A549 (cell line): ENCODE measurements at regions of chr6 and their contacts with region 1.

Region 1: DNA sequence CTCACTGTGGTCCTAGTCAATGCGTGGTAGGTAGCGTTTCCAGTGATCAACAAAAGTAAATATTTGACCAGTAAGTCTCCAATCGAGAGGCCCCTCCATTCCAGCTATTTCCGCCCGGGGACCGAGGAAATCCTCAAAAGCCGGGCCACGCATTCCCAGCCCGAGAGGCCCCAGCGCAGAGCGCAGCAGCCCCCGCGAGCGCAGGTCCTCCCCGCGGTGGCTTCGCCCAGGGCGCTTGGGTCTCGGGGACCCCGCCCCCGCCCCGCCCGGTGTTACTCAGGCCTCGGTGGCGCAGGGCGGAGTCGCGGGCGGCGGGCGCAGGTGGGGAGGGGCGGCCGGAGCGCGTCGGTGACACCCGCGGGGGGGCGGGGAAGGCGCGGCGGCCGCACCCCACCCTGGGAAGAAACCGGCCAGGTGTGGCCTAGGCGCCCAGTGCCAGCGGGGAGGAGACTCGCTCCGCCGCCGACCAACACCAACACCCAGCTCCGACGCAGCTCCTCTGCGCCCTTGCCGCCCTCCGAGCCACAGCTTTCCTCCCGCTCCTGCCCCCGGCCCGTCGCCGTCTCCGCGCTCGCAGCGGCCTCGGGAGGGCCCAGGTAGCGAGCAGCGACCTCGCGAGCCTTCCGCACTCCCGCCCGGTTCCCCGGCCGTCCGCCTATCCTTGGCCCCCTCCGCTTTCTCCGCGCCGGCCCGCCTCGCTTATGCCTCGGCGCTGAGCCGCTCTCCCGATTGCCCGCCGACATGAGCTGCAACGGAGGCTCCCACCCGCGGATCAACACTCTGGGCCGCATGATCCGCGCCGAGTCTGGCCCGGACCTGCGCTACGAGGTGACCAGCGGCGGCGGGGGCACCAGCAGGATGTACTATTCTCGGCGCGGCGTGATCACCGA is at the start of gene DSP:
- DNase-seq: peak; percentile 55 to 69
- ATAC-seq: peak; percentile 72 to 79
- H3K4me3 ChIP-seq: peak within 1 kb of the TSS; percentile 66
- H3K27ac ChIP-seq: peak within 1 kb of the TSS; percentile 86 to 95
- H3K4me1 ChIP-seq: peaks cover 22% of the 10 kb centered on the region
- CTCF ChIP-seq: no peak
- EP300 ChIP-seq: no peak
- POLR2A ChIP-seq: peak; percentile 69
- RAD21 ChIP-seq: no peak
- polyA plus RNA-seq, gene DSP: 34.1 and 45.4 TPM in 2 replicates

Region 2: DNA sequence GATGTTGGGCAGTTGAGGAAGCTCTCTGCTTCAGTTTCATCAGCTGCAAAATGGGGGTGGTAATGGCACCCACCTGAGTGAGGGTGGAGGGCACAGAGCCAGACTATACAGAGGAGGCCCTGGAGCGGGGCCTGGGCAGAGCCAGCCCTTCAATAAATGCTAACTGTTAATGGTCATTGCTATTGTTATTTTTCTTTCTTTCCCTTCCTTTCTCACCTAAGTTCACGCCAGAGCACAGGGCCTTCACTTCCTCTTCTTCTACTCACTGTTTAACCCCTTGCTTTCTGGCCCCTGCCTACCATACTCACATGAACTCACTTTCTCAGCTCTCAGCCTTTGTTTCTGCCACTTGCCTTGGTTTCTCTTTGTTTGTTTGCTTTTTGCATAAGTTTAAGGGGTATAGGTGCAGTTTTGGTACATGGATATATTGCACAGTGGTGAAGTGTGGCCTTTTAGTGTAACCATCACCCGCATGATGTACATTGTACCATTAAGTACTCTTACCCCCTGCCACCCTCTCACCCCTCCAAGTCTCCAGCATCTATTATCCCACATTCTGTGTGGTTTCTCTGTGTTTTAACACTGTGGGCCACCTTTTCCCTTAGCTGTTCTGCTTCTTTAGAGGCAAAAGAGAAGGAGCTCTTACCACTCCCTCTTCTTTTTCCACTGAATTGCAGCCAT is 441.2 kb before region 1 on chr6:
- CTCF ChIA-PET with region 1: no interaction called
- POLR2A ChIA-PET with region 1: no interaction called
- DNase-seq: no peak
- ATAC-seq: no peak
- H3K4me3 ChIP-seq: no peak overlapping the region
- H3K27ac ChIP-seq: no peak overlapping the region
- H3K4me1 ChIP-seq: no peaks in the 10 kb centered on the region
- CTCF ChIP-seq: no peak
- EP300 ChIP-seq: no peak
- POLR2A ChIP-seq: no peak
- RAD21 ChIP-seq: no peak

Region 3: DNA sequence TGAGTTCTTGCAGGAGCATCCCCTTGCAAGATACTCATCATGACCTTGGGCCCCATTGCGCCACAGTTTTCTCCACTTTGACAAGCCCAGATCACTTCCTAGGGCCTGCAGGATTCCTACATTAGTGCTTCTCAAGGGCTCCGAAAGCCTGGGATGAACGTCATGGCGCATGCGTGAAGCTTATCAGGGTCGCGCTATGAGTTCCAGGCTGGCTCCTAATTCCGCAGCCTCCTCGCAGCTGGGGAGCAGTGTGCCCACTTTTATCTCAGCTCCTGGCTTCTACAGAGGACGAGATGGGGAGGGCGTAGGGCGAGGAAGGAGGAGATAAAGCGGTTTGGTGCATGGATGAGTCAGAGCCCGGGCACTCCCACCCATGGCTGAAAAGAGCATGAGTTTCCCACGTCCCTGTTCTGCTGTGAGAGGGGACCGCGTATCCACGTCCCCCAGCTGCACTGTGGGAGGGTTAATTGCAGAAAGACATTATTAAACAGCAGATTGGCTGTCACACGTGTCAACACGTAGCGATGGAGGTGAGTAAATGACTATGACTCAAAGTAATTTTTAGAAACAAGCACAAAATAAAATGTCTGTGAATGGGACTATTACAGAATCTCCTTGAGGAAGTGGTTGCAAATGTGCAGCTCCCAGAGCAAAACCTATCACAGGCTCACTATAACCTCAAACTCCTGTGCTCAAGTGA is 72.9 kb before region 1 on chr6:
- CTCF ChIA-PET with region 1: no interaction called
- POLR2A ChIA-PET with region 1: interaction called, 10 read pairs
- DNase-seq: peak; percentile 64 to 75
- ATAC-seq: peak; percentile 92
- H3K4me3 ChIP-seq: peak overlapping the region; percentile 38
- H3K27ac ChIP-seq: peak overlapping the region; percentile 58 to 88
- H3K4me1 ChIP-seq: peaks cover 18% of the 10 kb centered on the region
- CTCF ChIP-seq: no peak
- EP300 ChIP-seq: no peak
- POLR2A ChIP-seq: peak; percentile 33
- RAD21 ChIP-seq: no peak

Region 4: DNA sequence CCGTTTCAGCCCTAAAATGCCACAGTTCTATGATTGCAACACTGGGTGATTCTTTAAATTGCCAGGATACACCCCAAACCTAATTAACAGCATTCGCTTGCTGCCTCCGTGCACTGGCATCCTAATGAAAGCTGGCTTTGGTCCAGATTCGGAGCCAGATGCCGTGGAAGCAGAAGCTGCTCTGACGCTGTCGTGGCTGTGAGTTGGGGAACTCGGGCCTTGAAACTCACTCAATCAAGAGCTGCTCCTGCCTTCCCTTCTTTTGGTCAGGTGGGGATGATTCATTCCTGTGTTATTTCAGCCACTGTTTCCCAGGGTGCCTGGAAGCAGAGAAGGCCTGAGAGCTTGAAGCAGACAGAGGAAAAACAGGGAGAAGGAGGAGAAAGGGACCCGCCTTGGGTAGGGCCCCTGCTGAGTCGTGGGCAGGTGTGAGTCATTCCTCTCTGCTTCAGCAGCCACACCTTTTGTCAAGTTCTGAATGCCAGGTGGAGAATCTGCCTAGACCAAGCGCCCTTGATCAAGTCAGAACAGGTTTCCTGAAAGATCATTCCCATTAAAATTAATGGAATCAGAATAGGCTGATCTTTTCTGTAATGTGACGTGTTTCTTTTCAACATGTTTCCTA is 36.1 kb before region 1 on chr6:
- CTCF ChIA-PET with region 1: no interaction called
- POLR2A ChIA-PET with region 1: interaction called, 11 read pairs
- DNase-seq: peak; percentile 56 to 81
- ATAC-seq: peak; percentile 91 to 95
- H3K4me3 ChIP-seq: no peak overlapping the region
- H3K27ac ChIP-seq: peak overlapping the region; percentile 61 to 64
- H3K4me1 ChIP-seq: peaks cover 14% of the 10 kb centered on the region
- CTCF ChIP-seq: no peak
- EP300 ChIP-seq: peak in 1 of 2 experiments; percentile 21; a peak in 1 of 5 replicates
- POLR2A ChIP-seq: no peak
- RAD21 ChIP-seq: 0 out of 5 replicates have a peak, but pooled peaks of 1 of the 2 experiments have one; percentile 5

Region 5: DNA sequence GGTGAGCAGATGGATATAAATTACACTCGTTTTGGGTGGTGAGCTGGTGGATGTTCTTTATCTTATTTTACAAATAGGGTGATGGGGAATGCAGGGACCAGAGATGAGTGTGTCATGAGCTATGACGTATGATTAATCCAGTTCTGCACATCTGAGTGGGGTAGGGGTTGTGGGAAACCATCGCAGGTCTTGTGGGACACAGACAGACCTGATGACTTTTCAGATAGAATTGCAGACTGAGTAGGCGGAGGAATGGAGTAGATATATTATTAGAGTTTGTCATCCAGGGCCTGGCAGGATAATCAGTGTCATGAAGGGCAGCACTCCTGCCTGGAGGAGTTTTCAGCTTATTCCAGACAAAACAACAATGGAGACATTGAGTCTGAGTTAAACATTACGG is 12.9 kb before region 1 on chr6:
- CTCF ChIA-PET with region 1: no interaction called
- POLR2A ChIA-PET with region 1: no interaction called
- DNase-seq: no peak
- ATAC-seq: no peak
- H3K4me3 ChIP-seq: no peak overlapping the region
- H3K27ac ChIP-seq: no peak overlapping the region
- H3K4me1 ChIP-seq: no peaks in the 10 kb centered on the region
- CTCF ChIP-seq: no peak
- EP300 ChIP-seq: no peak
- POLR2A ChIP-seq: no peak
- RAD21 ChIP-seq: no peak

Region 6: GRCh38 chr6:7554533-7555275 is 13.3 kb after region 1 on chr6:
- CTCF ChIA-PET with region 1: no interaction called
- POLR2A ChIA-PET with region 1: no interaction called
- DNase-seq: no peak
- ATAC-seq: no peak
- H3K4me3 ChIP-seq: no peak overlapping the region
- H3K27ac ChIP-seq: no peak overlapping the region
- H3K4me1 ChIP-seq: peaks cover 14% of the 10 kb centered on the region
- CTCF ChIP-seq: no peak
- EP300 ChIP-seq: no peak
- POLR2A ChIP-seq: no peak
- RAD21 ChIP-seq: no peak